ENCODE measurements at regions of chr7 and their contacts with region 1.

Region 1: DNA sequence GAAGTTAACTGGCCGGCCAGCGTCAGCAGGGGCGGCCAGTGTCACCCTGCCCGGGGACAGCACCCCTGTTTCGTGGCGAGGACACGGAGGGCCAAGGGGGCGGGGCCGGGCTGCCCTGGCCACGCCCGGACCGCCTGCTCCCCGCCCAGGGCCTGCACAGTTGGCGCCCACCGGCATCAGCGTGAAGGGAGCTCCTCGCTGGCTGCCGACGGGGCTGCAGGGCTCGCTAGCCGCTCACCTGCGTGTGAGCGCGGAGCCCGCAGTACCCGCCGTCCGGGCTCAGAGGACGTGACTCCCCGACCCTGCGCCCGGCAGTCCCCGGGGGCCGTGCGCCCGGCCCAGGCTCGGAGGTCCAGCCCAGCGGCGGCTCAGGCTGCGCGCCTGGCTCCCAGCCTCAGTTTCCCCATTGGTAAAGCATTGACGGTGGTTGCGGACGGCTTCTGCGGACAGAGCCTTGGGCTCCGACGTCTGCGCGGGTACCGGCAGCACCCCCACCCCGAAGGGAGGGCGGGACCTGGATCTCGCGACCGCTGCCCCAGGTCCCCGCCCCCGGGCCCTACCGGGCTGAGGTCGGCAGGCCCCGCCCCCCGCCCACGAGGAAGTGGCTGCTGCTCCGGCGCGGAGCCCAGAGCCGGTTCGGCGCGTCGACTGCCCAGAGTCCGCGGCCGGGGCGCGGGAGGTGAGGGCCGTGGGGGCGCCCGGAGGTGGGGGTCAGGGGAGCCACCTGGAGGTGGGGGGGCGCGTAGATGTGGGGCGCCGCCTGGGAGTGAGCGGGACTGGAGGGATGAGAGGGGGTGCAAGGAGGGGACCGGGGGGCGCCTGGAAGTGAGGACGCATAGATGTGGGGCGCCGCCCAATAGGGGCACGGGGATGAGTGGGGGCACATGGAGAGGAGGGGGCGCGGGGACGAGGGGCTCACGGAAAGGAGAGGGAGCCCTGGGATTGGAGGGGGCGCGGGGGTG is at the start of gene ARPC1B:
- DNase-seq: peak; percentile 89
- ATAC-seq: peak; percentile 66
- total RNA-seq, gene ARPC1B: 125 TPM

Region 2: GRCh38 chr7:100673300-100673941 is 1299.0 kb after region 1 on chr7 and contains the start of gene GNB2:
- intact Hi-C with region 1: loop called (anchors 5 kb)
- DNase-seq: peak; percentile 100
- ATAC-seq: peak; percentile 95
- total RNA-seq, gene GNB2: 179 TPM